Heart left ventricle (tissue), 16 donors: ENCODE measurements at regions of chr18 and their contacts with region 1.

Region 1: DNA sequence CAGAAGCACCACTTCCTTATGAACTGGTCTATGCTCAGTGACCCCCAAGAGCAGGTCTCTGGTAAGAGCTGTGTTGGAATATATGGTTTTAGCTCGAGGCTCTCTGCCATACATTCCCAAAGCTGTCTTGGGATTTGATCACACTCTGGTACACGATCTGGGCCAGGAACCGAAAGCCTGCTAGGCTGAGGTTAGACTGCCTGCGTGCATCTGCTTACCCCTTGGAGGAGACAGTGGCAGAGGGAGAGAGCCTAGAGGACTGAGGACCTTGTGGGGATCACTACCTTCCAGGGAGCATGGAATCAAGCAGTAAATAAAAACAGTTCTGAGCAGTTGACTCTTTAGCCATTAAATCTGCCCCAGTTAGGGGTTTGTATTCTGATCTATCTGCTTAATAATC is 63.7 kb downstream of the ZNF532 start:
- DNase-seq: no peak
- ATAC-seq: peak in 3 of 4 donors; percentile 43 to 53 (median 46)
- H3K4me3 ChIP-seq: no peak overlapping the region
- H3K27ac ChIP-seq: peak overlapping the region; percentile 12 to 77 (median 60)
- H3K4me1 ChIP-seq: peaks cover 5 to 37% (median 28%) of the 10 kb centered on the region in 12 donors
- H3K27me3 ChIP-seq: no peaks in the 10 kb centered on the region
- CTCF ChIP-seq: no peak
- POLR2A ChIP-seq: no peak

Region 2: DNA sequence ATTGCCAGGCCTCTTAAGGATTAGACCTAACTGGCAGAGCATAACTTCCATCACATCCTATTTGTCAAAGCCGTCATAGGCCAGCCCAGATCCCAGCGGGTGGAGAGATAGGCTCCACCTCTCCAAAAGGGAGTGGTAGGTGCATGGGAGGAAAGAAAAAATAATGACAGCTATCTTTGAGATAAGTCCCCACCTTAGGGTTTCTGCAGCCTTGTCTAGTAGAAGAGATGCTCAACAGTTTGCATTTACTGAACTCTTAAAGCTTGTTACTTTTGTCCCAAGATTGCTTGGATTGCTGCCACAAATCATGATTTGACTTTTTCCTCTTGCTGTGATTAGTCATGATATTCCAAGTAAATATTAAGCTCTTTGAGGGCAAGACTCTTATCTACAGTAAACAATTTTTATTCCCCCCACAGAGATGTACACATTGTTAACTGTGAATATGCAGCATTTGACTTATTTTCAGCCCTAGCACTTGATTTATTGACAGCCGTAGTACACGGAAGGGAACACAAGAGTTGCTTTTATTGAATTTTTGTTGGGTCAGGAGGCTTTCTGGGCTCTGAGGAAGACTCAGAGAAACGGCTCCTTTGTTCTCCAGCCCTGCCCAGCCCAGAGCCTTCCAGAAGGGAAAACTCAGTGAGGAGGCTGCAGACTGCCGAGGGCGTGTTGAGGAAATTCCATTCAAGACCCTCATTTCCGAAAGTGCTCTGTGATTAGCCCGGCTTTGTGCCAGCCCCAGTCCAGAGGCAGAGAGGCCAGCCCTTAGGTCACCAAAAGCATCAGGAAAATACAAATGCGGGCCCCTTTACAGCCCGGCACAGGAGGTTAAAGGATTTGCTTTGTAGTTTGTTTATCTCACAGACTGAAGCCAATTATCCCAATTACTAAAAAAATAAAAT is 139.2 kb before region 1 on chr18:
- intact Hi-C with region 1: loop called in 1 of 10 experiments (anchors 10 kb)
- DNase-seq: peak; percentile 68 to 77 (median 69)
- ATAC-seq: peak in 3 of 4 donors; percentile 67 to 77 (median 68)
- H3K4me3 ChIP-seq: no peak overlapping the region
- H3K27ac ChIP-seq: peak overlapping the region; percentile 5 to 76 (median 72)
- H3K4me1 ChIP-seq: peaks cover 0 to 44% (median 27%) of the 10 kb centered on the region in 12 donors
- H3K27me3 ChIP-seq: no peaks in the 10 kb centered on the region
- CTCF ChIP-seq: no peak
- POLR2A ChIP-seq: no peak